T-cell (primary cell): ENCODE measurements at regions of chr2 and their contacts with region 1.

Region 1: GRCh38 chr2:42663106-42663780 is 94.8 kb downstream of the MTA3 start:
- DNase-seq: peak; percentile 35 to 84 (median 54)
- ATAC-seq: peak; percentile 90 to 96 (median 94)
- H3K4me3 ChIP-seq: no peak overlapping the region
- H3K4me3 Mint-ChIP-seq: no peak overlapping the region
- H3K27ac ChIP-seq: no peak overlapping the region
- H3K27ac Mint-ChIP-seq: peak overlapping the region; percentile 41 to 87
- H3K4me1 ChIP-seq: peaks cover 11 to 28% of the 10 kb centered on the region in 2 experiments
- H3K4me1 Mint-ChIP-seq: peaks cover 11 to 24% (median 17%) of the 10 kb centered on the region in 3 donors
- H3K27me3 ChIP-seq: no peaks in the 10 kb centered on the region
- H3K27me3 Mint-ChIP-seq: no peaks in the 10 kb centered on the region

Region 2: DNA sequence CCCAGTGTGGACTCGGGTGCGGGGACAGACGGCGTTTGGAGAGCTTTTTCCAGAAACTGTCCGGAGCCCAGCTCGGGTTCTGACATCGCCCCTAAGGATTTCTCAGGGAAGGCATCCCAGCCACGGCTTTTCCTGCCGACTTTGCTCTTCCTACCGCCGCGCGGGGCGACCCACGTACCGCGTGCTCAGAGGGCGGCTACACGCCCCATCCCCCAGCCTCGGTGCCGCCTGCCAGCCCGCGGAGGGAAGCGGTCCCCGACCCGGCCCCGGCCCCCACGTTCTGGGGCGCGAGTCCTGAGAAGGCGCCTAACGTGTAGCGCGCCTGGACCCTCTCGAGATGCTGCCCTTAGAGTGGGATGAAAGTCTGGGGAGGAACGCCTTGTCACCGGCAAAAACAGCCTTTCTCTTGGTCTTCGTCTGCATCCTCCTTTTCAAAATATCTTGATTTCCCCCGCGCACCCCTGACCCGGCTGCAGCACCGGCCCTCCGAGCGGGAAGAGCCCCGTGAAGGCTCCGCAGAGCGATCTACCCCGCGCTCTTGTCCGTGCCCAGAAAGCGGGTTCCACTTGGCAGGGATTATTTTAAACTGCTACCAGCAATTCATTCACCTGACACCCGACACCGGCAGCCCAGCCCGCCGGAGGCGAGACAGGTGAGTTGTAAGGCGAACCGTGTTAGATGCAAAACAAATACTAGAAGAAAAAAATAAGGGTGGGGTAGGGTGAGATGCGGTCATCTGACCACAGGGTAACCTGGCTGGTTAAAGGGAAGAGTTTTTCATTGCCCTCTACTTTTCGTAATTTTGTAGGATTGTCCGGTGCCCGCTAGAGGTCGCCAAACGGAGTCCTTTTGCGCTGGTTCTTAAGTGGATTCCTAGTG is 168.6 kb before region 1 on chr2:
- CTCF ChIA-PET with region 1: interaction called, 5 to 9 read pairs
- POLR2A ChIA-PET with region 1: interaction called in 1 of 2 experiments, 10 read pairs
- DNase-seq: peak; percentile 34 to 83 (median 63)
- ATAC-seq: peak; percentile 53 to 59 (median 54)
- H3K4me3 ChIP-seq: peak overlapping the region; percentile 50 to 87
- H3K4me3 Mint-ChIP-seq: peak overlapping the region; percentile 90 to 93 (median 90)
- H3K27ac ChIP-seq: no peak overlapping the region
- H3K27ac Mint-ChIP-seq: peak overlapping the region; percentile 78 to 82
- H3K4me1 ChIP-seq: peaks cover 12 to 17% of the 10 kb centered on the region in 2 experiments
- H3K4me1 Mint-ChIP-seq: peaks cover 8 to 11% (median 8%) of the 10 kb centered on the region in 3 donors
- H3K27me3 ChIP-seq: peaks cover 0 to 17% of the 10 kb centered on the region in 2 experiments
- H3K27me3 Mint-ChIP-seq: peaks cover 6 to 18% of the 10 kb centered on the region in 2 donors

Region 3: DNA sequence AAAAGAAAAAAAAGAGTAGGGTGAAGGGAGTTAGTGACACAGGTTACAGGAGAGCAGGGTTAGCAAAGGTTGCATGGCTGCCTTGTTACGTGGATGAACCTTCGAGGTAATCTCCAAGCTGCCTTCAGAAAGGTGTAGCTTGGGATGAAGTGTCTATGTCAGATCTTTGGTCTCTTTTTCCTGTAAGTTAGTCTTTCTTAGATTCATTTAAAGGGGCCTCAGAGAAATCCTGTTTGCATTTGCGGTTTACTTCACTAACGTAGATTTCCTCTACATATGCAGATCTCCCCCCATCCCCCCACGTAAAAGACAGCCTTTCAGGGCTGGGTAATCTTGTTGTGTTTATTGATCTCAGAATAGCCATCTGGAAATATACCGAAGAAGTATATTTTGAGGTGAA is 11.2 kb before region 1 on chr2:
- CTCF ChIA-PET with region 1: interaction called, 5 to 10 read pairs
- POLR2A ChIA-PET with region 1: interaction called in 1 of 2 experiments, 3 read pairs
- DNase-seq: peak in 33 of 35 experiments; percentile 10 to 78 (median 58)
- ATAC-seq: peak; percentile 62 to 93 (median 83)
- H3K4me3 ChIP-seq: no peak overlapping the region
- H3K4me3 Mint-ChIP-seq: peak overlapping the region; percentile 55 to 63 (median 61)
- H3K27ac ChIP-seq: peak overlapping the region; percentile 70
- H3K27ac Mint-ChIP-seq: peak overlapping the region; percentile 90 to 96
- H3K4me1 ChIP-seq: peaks cover 40 to 80% of the 10 kb centered on the region in 2 experiments
- H3K4me1 Mint-ChIP-seq: peaks cover 62 to 69% (median 67%) of the 10 kb centered on the region in 3 donors
- H3K27me3 ChIP-seq: no peaks in the 10 kb centered on the region
- H3K27me3 Mint-ChIP-seq: no peaks in the 10 kb centered on the region

Region 4: DNA sequence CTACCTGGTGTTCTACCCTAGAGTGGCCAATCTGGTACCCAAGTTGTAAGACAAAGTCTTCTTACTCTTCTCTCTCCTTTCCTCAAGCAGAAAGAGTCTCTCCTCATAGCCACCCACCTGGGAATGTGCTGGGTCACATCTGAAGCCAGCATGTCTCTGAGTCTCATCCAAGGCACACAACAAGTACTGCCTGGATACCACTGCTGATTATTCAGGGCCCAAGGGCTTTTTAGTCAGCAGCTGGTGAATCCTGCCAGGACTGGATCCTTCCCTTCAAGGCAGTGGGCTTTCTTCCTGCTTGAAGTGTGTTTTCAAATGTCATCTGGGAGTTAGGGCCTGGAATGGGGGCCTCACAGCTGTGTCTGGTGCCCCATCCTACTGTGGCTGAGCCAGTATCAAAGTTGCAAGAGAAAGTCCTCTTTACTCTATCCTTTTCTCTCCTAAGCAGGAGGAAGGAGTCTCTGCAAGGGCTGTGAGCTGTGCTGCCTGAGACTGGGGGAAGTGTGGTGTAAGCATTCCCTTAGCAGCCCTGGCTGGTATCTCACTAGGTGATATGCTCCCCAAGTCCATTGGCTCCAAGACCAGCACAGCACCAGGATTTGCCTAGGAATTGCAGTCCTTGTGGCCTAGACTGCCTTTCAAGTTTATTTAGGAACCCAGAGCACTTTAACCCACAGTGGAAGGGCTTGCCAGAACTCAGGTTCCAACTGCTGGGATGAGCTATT is 73.5 kb after region 1 on chr2:
- CTCF ChIA-PET with region 1: no interaction called
- POLR2A ChIA-PET with region 1: no interaction called
- DNase-seq: no peak
- ATAC-seq: no peak
- H3K4me3 ChIP-seq: no peak overlapping the region
- H3K4me3 Mint-ChIP-seq: no peak overlapping the region
- H3K27ac ChIP-seq: no peak overlapping the region
- H3K27ac Mint-ChIP-seq: no peak overlapping the region
- H3K4me1 ChIP-seq: no peaks in the 10 kb centered on the region
- H3K4me1 Mint-ChIP-seq: peaks cover 0 to 18% (median 3%) of the 10 kb centered on the region in 3 donors
- H3K27me3 ChIP-seq: no peaks in the 10 kb centered on the region
- H3K27me3 Mint-ChIP-seq: no peaks in the 10 kb centered on the region